ENCODE measurements at regions of chr19 and their contacts with region 1.

Region 1: GRCh38 chr19:39341719-39342604 is at the start of gene SAMD4B:
- DNase-seq: peak; percentile 93
- ATAC-seq: peak; percentile 92
- H3K4me3 ChIP-seq: peak within 1 kb of the TSS; percentile 91 to 92
- H3K27ac ChIP-seq: peak within 1 kb of the TSS; percentile 86
- H3K4me1 ChIP-seq: peaks cover 8 to 27% of the 10 kb centered on the region in 2 experiments
- H3K27me3 ChIP-seq: no peaks in the 10 kb centered on the region
- CTCF ChIP-seq: peak; percentile 26 to 67 (median 45); a peak in 3 of 6 replicates
- POLR2A ChIP-seq: peak; percentile 91
- RAD21 ChIP-seq: no peak
- total RNA-seq, gene SAMD4B: 127 TPM

Region 2: DNA sequence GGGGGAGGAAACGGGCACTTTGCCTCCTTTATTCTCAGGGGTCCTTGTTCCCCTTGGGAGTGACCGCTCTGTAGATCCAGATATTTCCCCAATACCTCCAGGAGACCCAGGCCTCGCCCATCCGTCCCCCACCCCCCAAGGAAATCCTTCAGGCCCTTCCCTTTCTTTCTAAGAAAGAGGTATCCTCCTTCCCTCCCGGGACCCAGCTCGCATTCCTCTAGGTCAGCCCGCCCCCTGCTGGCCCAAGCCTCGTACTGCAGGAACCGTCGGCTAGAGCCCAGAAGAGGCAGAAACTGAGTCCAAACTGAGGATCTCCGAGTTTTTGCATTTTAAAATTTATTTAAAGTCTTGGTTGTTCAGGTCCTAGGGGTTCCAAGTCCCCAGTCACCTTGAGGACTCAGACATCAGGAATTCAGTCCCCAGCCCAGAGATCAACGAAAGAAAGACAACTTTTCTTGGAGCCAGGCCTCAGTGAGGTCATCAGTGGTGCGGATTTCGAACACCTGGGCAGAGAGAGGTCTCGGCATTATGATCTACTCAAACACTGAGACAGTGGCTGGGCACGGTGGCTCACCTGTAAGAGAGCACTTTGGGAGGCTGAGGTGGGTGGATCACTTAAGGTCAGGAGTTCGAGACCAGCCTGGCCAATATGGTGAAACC is 13.8 kb before region 1 on chr19:
- CTCF ChIA-PET with region 1: interaction called, 11 read pairs
- POLR2A ChIA-PET with region 1: interaction called, 6 read pairs
- RAD21 ChIA-PET with region 1: no interaction called
- intact Hi-C with region 1: no loop called
- DNase-seq: no peak
- ATAC-seq: peak; percentile 83
- H3K4me3 ChIP-seq: no peak overlapping the region
- H3K27ac ChIP-seq: no peak overlapping the region
- H3K4me1 ChIP-seq: peaks cover 0 to 12% of the 10 kb centered on the region in 2 experiments; a peak in 1 of 4 replicates
- H3K27me3 ChIP-seq: no peaks in the 10 kb centered on the region
- CTCF ChIP-seq: peak; percentile 95 to 98 (median 96)
- POLR2A ChIP-seq: no peak
- RAD21 ChIP-seq: peak; percentile 97